Panc1 (cell line): ENCODE measurements at regions of chr9 and their contacts with region 1.

Region 1: GRCh38 chr9:124852829-124853531 is at the start of gene WDR38:
- DNase-seq: no peak
- ATAC-seq: peak; percentile 90
- H3K4me3 ChIP-seq: peak within 1 kb of the TSS; percentile 48 to 56
- H3K27ac ChIP-seq: peak within 1 kb of the TSS; percentile 29; the same call in 1 of the 2 replicates
- H3K4me1 ChIP-seq: peaks cover 3% of the 10 kb centered on the region; the same call in 1 of the 2 replicates
- H3K27me3 ChIP-seq: no peaks in the 10 kb centered on the region
- CTCF ChIP-seq: peak; percentile 98
- total RNA-seq, gene WDR38: not detected

Region 2: GRCh38 chr9:124771021-124771866 is 81.7 kb before region 1 on chr9 and contains the start of gene NR6A1:
- CTCF ChIA-PET with region 1: interaction called, 134 read pairs
- POLR2A ChIA-PET with region 1: interaction called, 18 read pairs
- in situ Hi-C with region 1: no loop called
- intact Hi-C with region 1: loop called (anchors 1 kb)
- DNase-seq: peak; percentile 86
- ATAC-seq: peak; percentile 92
- H3K4me3 ChIP-seq: peak within 1 kb of the TSS; percentile 70 to 74
- H3K27ac ChIP-seq: peak within 1 kb of the TSS; percentile 90
- H3K4me1 ChIP-seq: peaks cover 25% of the 10 kb centered on the region
- H3K27me3 ChIP-seq: no peaks in the 10 kb centered on the region
- CTCF ChIP-seq: peak; percentile 38; the same call in 1 of the 2 replicates
- total RNA-seq, gene NR6A1: 7.6 TPM

Region 3: DNA sequence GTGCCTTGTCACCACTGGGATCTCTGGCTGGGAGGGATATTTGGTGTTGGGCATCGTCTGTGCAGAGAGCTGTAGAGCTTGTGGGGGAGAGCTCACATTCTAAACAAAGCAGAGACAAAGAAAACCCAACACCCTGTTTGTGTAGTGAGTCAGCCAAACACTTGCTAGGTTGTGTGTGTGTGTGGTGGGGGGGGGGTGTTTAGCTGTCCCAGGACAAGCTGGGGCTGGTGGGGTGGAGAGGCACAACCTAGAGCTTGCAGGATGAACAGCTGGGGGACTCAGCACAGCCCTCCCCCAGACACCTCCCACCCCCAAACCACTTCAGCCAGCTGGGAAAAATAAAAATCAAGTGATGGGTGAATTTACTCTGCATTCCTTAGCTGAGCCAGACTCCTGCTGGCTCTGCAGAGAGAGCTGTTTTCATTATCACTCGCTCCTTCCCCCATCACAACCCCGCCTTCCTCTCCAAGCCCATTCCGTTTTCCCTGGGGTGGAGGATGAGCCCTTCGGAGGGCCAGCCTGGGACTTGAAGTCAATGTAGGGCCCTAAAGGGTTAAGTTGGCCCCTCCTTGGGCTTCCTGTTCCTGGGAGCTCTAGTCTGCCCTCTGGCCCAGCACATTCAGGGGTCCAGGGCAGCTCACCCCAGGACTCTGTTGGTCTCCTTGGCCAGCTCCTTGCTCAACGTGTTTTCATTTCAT is 73.5 kb before region 1 on chr9:
- CTCF ChIA-PET with region 1: interaction called, 134 read pairs
- POLR2A ChIA-PET with region 1: no interaction called
- in situ Hi-C with region 1: no loop called
- intact Hi-C with region 1: no loop called
- DNase-seq: no peak
- ATAC-seq: peak; percentile 83
- H3K4me3 ChIP-seq: peak overlapping the region in 1 of 2 experiments; percentile 15; a peak in 2 of 4 replicates
- H3K27ac ChIP-seq: peak overlapping the region; percentile 77
- H3K4me1 ChIP-seq: peaks cover 38% of the 10 kb centered on the region
- H3K27me3 ChIP-seq: no peaks in the 10 kb centered on the region
- CTCF ChIP-seq: no peak

Region 4: GRCh38 chr9:124829284-124829669 is 23.7 kb before region 1 on chr9:
- CTCF ChIA-PET with region 1: interaction called, 12 read pairs
- POLR2A ChIA-PET with region 1: no interaction called
- in situ Hi-C with region 1: no loop called
- intact Hi-C with region 1: no loop called
- DNase-seq: no peak
- ATAC-seq: no peak
- H3K4me3 ChIP-seq: no peak overlapping the region
- H3K27ac ChIP-seq: no peak overlapping the region
- H3K4me1 ChIP-seq: no peaks in the 10 kb centered on the region; the same call in 1 of the 2 replicates
- H3K27me3 ChIP-seq: no peaks in the 10 kb centered on the region
- CTCF ChIP-seq: no peak

Region 5: GRCh38 chr9:124839612-124840299 is 13.2 kb before region 1 on chr9:
- CTCF ChIA-PET with region 1: interaction called, 9 read pairs
- POLR2A ChIA-PET with region 1: interaction called, 12 read pairs
- in situ Hi-C with region 1: no loop called
- intact Hi-C with region 1: no loop called
- DNase-seq: no peak
- ATAC-seq: peak; percentile 69
- H3K4me3 ChIP-seq: no peak overlapping the region
- H3K27ac ChIP-seq: no peak overlapping the region
- H3K4me1 ChIP-seq: peaks cover 6% of the 10 kb centered on the region
- H3K27me3 ChIP-seq: no peaks in the 10 kb centered on the region
- CTCF ChIP-seq: no peak; the same call in none of the 2 replicates